ENCODE measurements at regions of chr4 and their contacts with region 1.

Region 1: GRCh38 chr4:142846729-142847596 is 862 bp upstream of the INPP4B start:
- DNase-seq: no peak
- H3K4me3 ChIP-seq: peak overlapping the region; percentile 39 to 72 (median 60)
- H3K27ac ChIP-seq: peak overlapping the region; percentile 35 to 81 (median 69)
- H3K4me1 ChIP-seq: peaks cover 5 to 27% (median 15%) of the 10 kb centered on the region in 3 donors
- H3K27me3 ChIP-seq: peaks cover 0 to 36% (median 0%) of the 10 kb centered on the region in 4 donors
- CTCF ChIP-seq: peak in 5 of 6 experiments; percentile 36 to 65 (median 39)
- POLR2A ChIP-seq: no peak

Region 2: DNA sequence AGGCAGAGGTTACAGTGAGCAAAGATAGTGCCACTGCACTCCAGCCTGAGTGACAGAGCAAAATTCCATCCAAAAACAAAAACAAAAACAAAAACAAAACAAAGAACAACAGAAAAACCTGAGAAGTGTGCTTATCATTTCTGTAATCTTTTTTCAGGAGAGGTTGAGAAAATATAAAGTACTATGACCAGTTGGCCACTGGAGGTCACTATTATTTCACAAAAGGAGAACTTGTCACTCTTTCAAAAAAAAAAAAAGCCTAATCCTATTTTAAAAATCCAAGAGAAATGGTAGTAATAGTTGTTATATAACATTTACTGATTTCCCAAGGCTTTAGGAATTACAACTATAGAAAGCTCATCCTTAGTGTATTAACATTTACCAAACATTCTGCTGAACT is 1688.7 kb before region 1 on chr4:
- intact Hi-C with region 1: loop called (anchors 10 kb)
- DNase-seq: no peak
- H3K4me3 ChIP-seq: no peak overlapping the region
- H3K27ac ChIP-seq: no peak overlapping the region
- H3K4me1 ChIP-seq: no peaks in the 10 kb centered on the region
- H3K27me3 ChIP-seq: peaks cover 0 to 2% (median 0%) of the 10 kb centered on the region in 4 donors
- CTCF ChIP-seq: peak in 4 of 6 experiments; percentile 41 to 52 (median 46)
- POLR2A ChIP-seq: no peak

Region 3: GRCh38 chr4:142126890-142127497 is 720.0 kb before region 1 on chr4:
- intact Hi-C with region 1: loop called (anchors 10 kb)
- DNase-seq: no peak
- H3K4me3 ChIP-seq: no peak overlapping the region
- H3K27ac ChIP-seq: no peak overlapping the region
- H3K4me1 ChIP-seq: peaks cover 4 to 6% (median 5%) of the 10 kb centered on the region in 3 donors
- H3K27me3 ChIP-seq: no peaks in the 10 kb centered on the region
- CTCF ChIP-seq: peak; percentile 59 to 82 (median 76)
- POLR2A ChIP-seq: no peak

Region 4: GRCh38 chr4:142353149-142353738 is 493.7 kb before region 1 on chr4:
- intact Hi-C with region 1: loop called (anchors 10 kb)
- DNase-seq: no peak
- H3K4me3 ChIP-seq: no peak overlapping the region
- H3K27ac ChIP-seq: peak overlapping the region in 1 of 4 donors; percentile 25
- H3K4me1 ChIP-seq: peaks cover 0 to 28% (median 13%) of the 10 kb centered on the region in 3 donors
- H3K27me3 ChIP-seq: no peaks in the 10 kb centered on the region
- CTCF ChIP-seq: peak; percentile 71 to 90 (median 80)
- POLR2A ChIP-seq: no peak

Region 5: GRCh38 chr4:142999915-143000314 is 153.0 kb after region 1 on chr4:
- intact Hi-C with region 1: no loop called
- DNase-seq: no peak
- H3K4me3 ChIP-seq: no peak overlapping the region
- H3K27ac ChIP-seq: no peak overlapping the region
- H3K4me1 ChIP-seq: no peaks in the 10 kb centered on the region
- H3K27me3 ChIP-seq: no peaks in the 10 kb centered on the region
- CTCF ChIP-seq: no peak
- POLR2A ChIP-seq: no peak

Measured in esophagus squamous epithelium (tissue), 5 donors.